ENCODE measurements at regions of chr5 and their contacts with region 1.

Region 1: GRCh38 chr5:44051591-44051990 is 337.6 kb downstream of the FGF10 start:
- DNase-seq: no peak

Region 2: DNA sequence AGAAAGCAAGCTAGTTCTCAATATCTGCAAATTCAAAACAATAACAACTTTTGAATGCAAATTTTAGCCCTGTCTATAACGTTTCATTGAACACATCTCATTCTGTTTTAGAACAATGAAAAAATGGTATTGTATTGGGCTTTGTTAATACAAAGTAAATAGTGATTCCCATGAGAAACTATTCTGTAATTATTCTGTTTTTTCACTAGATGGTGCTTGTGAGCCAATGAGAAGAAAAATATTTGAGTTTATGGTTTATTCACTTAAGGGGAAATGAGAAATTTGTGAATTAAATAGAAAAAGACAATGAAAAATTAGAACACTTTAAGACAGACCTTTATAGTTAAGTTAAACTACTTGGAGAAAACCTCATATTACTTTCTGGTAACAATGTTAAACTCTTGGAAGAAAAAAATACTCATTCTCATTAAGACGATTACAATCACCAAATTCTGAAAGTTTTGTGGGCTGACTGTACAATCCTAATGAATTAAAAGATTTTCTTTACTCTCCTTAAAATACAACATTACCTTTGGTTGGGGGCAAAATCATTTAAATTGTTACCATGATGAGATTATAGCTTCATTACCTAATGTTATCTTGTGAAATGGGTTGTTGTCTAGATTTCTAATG is 321.6 kb before region 1 on chr5:
- CTCF ChIA-PET with region 1: interaction called, 11 read pairs
- POLR2A ChIA-PET with region 1: no interaction called
- DNase-seq: no peak